K562 (cell line): ENCODE measurements at regions of chr5 and their contacts with region 1.

Region 1: GRCh38 chr5:5492087-5492933 is 69.8 kb downstream of the ICE1 start:
- DNase-seq: peak; percentile 50 to 81 (median 57)
- ATAC-seq: peak; percentile 66
- H3K4me3 ChIP-seq: no peak overlapping the region
- H3K27ac ChIP-seq: no peak overlapping the region
- H3K4me1 ChIP-seq: peaks cover 3 to 9% of the 10 kb centered on the region in 2 experiments; a peak in 3 of 5 replicates
- H3K27me3 ChIP-seq: peaks cover 5 to 11% of the 10 kb centered on the region in 2 experiments; a peak in 1 of 5 replicates
- CTCF ChIP-seq: peak; percentile 76 to 91 (median 85)
- EP300 ChIP-seq: no peak
- POLR2A ChIP-seq: no peak
- RAD21 ChIP-seq: peak; percentile 91 to 93

Region 2: DNA sequence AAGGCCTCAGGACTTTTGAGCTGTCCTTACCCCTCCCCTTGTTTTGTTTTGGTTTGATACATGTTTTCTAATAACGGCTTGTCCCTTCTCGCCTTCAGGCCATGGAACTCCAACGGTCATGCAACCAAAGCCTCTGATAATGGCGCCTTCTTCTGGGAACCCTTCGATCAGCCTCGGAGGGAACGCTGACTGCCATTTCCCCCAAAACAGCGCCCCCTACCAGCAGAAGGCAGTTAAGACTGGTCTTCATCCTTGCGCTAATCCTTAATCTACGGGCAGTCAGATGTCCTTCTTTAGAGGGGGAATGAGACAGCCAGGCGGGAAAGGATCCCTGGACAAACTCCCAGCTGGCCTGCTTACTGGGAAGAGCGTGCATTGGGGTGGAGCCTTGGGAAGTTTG is 206.8 kb after region 1 on chr5:
- CTCF ChIA-PET with region 1: interaction called, 7 read pairs
- POLR2A ChIA-PET with region 1: no interaction called
- in situ Hi-C with region 1: no loop called
- intact Hi-C with region 1: loop called (anchors 1 kb)
- DNase-seq: peak; percentile 34 to 58 (median 47)
- ATAC-seq: peak; percentile 93
- H3K4me3 ChIP-seq: no peak overlapping the region
- H3K27ac ChIP-seq: no peak overlapping the region
- H3K4me1 ChIP-seq: no peaks in the 10 kb centered on the region
- H3K27me3 ChIP-seq: no peaks in the 10 kb centered on the region
- CTCF ChIP-seq: peak; percentile 70 to 84 (median 74)
- EP300 ChIP-seq: no peak
- POLR2A ChIP-seq: no peak
- RAD21 ChIP-seq: peak; percentile 71 to 73

Region 3: DNA sequence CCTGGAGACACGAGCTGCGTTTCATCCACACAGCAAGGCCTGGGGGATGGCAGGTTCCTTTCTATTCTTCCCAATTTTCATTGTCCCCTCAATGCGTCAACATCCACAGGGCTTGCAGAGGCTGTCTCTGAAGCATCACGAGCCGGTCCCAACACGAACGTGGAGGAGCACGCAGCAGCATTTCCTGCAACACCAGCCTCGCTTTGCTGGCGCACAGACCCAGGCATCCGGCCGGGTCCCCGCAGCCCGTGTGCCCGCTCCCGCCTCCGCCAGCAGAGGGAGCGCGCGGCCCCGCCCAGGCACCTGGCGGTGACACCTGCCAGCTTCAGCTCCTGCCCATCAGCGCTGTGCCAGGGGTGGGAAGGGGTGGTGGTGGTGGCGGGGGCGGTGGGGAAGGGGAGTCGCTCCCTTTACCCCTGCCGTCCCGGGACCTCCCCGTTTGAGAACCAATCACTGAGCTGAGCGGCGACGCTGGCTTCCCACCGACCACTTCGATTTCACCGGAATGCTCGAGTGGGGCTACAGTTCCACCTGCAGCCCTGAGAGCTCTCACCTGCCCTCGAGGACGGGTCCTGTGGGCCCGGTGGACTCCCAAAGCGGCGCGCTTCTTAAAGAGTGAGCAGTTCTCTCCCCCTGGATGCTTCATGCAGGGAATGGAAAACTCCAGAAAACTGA is 394.6 kb after region 1 on chr5:
- CTCF ChIA-PET with region 1: no interaction called
- POLR2A ChIA-PET with region 1: no interaction called
- in situ Hi-C with region 1: no loop called
- intact Hi-C with region 1: loop called (anchors 5 kb)
- DNase-seq: peak; percentile 34 to 72 (median 70)
- ATAC-seq: peak; percentile 97
- H3K4me3 ChIP-seq: no peak overlapping the region
- H3K27ac ChIP-seq: no peak overlapping the region
- H3K4me1 ChIP-seq: peaks cover 0 to 7% of the 10 kb centered on the region in 2 experiments; a peak in 2 of 5 replicates
- H3K27me3 ChIP-seq: peaks cover 0 to 8% of the 10 kb centered on the region in 2 experiments; a peak in 2 of 5 replicates
- CTCF ChIP-seq: peak; percentile 60 to 87 (median 65)
- EP300 ChIP-seq: no peak
- POLR2A ChIP-seq: no peak
- RAD21 ChIP-seq: peak in 1 of 2 experiments; percentile 54; a peak in 3 of 4 replicates

Region 4: DNA sequence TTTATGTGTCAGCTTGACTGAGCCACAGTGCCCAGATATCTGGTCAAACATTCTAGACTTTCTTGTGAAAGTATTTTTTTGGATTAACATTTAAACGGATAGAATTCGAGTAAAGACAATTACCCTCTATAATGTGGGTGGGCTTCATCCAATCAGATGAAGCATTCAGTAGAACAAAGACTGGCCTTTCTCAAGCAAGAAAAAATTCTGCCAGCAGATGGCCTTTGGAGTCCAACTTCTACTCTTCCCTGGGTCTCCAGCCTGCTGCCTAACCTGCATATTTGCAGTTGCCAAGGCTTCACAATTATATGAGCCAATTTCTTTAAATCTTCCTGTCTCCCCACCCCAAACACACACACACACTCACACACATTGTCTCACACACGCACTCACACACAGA is 799.7 kb after region 1 on chr5:
- CTCF ChIA-PET with region 1: no interaction called
- POLR2A ChIA-PET with region 1: no interaction called
- in situ Hi-C with region 1: no loop called
- intact Hi-C with region 1: loop called (anchors 5 kb)
- DNase-seq: peak in 1 of 4 experiments; percentile 27
- ATAC-seq: peak; percentile 80
- H3K4me3 ChIP-seq: no peak overlapping the region
- H3K27ac ChIP-seq: no peak overlapping the region
- H3K4me1 ChIP-seq: no peaks in the 10 kb centered on the region
- H3K27me3 ChIP-seq: no peaks in the 10 kb centered on the region
- CTCF ChIP-seq: peak in 2 of 3 experiments; percentile 33 to 61; a peak in 4 of 6 replicates
- EP300 ChIP-seq: no peak
- POLR2A ChIP-seq: no peak
- RAD21 ChIP-seq: peak; percentile 62 to 73

Region 5: DNA sequence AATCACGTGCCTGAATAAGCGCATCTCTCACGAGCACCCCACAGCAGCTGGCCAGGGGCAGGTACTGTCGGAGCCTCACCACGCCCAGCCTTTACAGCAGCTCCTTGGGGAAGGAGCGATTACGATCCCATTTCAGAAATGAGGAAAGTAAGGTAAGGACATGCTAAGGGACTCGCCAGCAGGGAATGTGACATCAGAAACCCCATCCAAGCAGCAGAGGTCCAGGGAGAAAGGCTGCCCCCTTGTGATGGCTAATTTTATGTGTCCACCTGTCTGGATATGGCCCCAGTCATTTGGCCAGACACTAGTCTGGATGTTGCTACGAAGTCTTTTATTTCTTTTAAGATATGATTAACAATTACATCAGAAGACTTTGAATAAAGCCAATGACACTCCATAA is 1033.6 kb after region 1 on chr5:
- CTCF ChIA-PET with region 1: no interaction called
- POLR2A ChIA-PET with region 1: no interaction called
- in situ Hi-C with region 1: no loop called
- intact Hi-C with region 1: loop called (anchors 5 kb)
- DNase-seq: peak; percentile 63 to 77 (median 66)
- ATAC-seq: peak; percentile 92
- H3K4me3 ChIP-seq: no peak overlapping the region
- H3K27ac ChIP-seq: no peak overlapping the region
- H3K4me1 ChIP-seq: no peaks in the 10 kb centered on the region
- H3K27me3 ChIP-seq: peaks cover 46 to 75% of the 10 kb centered on the region in 2 experiments; a peak in 4 of 5 replicates
- CTCF ChIP-seq: peak; percentile 76 to 78 (median 78)
- EP300 ChIP-seq: no peak
- POLR2A ChIP-seq: no peak
- RAD21 ChIP-seq: peak; percentile 69 to 88

Region 6: GRCh38 chr5:6576861-6577501 is 1084.7 kb after region 1 on chr5:
- CTCF ChIA-PET with region 1: interaction called, 6 read pairs
- POLR2A ChIA-PET with region 1: no interaction called
- in situ Hi-C with region 1: no loop called
- intact Hi-C with region 1: loop called (anchors 2 kb)
- DNase-seq: peak; percentile 52 to 60 (median 56)
- ATAC-seq: peak; percentile 76
- H3K4me3 ChIP-seq: no peak overlapping the region
- H3K27ac ChIP-seq: no peak overlapping the region
- H3K4me1 ChIP-seq: peaks cover 0 to 4% of the 10 kb centered on the region in 2 experiments; a peak in 1 of 5 replicates
- H3K27me3 ChIP-seq: peaks cover 58 to 75% of the 10 kb centered on the region in 2 experiments
- CTCF ChIP-seq: peak; percentile 54 to 70 (median 62)
- EP300 ChIP-seq: no peak
- POLR2A ChIP-seq: no peak
- RAD21 ChIP-seq: peak; percentile 44 to 72

Region 7: DNA sequence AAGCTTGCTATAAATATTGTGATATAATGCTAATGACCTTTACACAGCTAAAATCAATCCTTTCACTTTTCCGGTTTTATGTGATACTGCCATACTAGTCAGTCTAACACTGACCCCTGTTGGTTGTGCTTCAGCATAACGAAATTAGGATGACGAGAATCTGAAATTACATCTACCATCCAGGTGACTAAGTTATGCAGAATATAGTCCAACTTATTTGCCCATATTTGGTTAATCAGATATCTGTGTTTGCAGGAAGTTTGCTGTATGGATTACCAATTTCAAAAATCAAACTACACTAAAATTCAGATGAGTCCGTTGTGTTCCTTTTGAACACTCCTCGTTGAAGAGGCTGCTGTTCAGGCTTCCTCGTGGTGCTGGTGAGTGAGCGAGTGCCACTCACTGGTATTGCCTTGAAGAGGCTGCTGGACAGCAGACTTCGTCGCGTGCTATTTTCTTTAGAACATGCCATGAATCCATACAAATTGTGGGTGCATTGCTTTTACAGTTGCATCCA is 1253.5 kb after region 1 on chr5:
- CTCF ChIA-PET with region 1: interaction called, 8 read pairs
- POLR2A ChIA-PET with region 1: no interaction called
- in situ Hi-C with region 1: loop called (anchors 25 kb)
- intact Hi-C with region 1: loop called (anchors 5 kb)
- DNase-seq: peak in 3 of 4 experiments; percentile 40 to 57 (median 43)
- ATAC-seq: peak; percentile 80
- H3K4me3 ChIP-seq: no peak overlapping the region
- H3K27ac ChIP-seq: no peak overlapping the region
- H3K4me1 ChIP-seq: no peaks in the 10 kb centered on the region
- H3K27me3 ChIP-seq: no peaks in the 10 kb centered on the region
- CTCF ChIP-seq: peak; percentile 51 to 79 (median 74); a peak in 5 of 6 replicates
- EP300 ChIP-seq: no peak
- POLR2A ChIP-seq: no peak
- RAD21 ChIP-seq: peak; percentile 68 to 80